ENCODE measurements at regions of chr6 and their contacts with region 1.

Region 1: GRCh38 chr6:31597006-31597405 is 4.2 kb upstream of the NCR3 start:
- DNase-seq: peak; percentile 61
- ATAC-seq: peak; percentile 78
- H3K4me3 Mint-ChIP-seq: no peak overlapping the region
- H3K27ac Mint-ChIP-seq: no peak overlapping the region
- H3K4me1 Mint-ChIP-seq: peaks cover 46% of the 10 kb centered on the region
- H3K27me3 Mint-ChIP-seq: no peaks in the 10 kb centered on the region

Region 2: GRCh38 chr6:30981942-30982772 is 614.8 kb before region 1 on chr6:
- CTCF ChIA-PET with region 1: no interaction called
- POLR2A ChIA-PET with region 1: no interaction called
- intact Hi-C with region 1: no loop called
- DNase-seq: no peak
- ATAC-seq: no peak
- H3K4me3 Mint-ChIP-seq: no peak overlapping the region
- H3K27ac Mint-ChIP-seq: no peak overlapping the region
- H3K4me1 Mint-ChIP-seq: peaks cover 6% of the 10 kb centered on the region
- H3K27me3 Mint-ChIP-seq: peaks cover 29% of the 10 kb centered on the region

Region 3: GRCh38 chr6:31493875-31494694 is 102.9 kb before region 1 on chr6:
- CTCF ChIA-PET with region 1: interaction called, 29 read pairs
- POLR2A ChIA-PET with region 1: no interaction called
- intact Hi-C with region 1: loop called (anchors 1 kb)
- DNase-seq: peak; percentile 91
- ATAC-seq: peak; percentile 58
- H3K4me3 Mint-ChIP-seq: peak overlapping the region; percentile 79
- H3K27ac Mint-ChIP-seq: peak overlapping the region; percentile 90
- H3K4me1 Mint-ChIP-seq: peaks cover 43% of the 10 kb centered on the region
- H3K27me3 Mint-ChIP-seq: no peaks in the 10 kb centered on the region

Region 4: DNA sequence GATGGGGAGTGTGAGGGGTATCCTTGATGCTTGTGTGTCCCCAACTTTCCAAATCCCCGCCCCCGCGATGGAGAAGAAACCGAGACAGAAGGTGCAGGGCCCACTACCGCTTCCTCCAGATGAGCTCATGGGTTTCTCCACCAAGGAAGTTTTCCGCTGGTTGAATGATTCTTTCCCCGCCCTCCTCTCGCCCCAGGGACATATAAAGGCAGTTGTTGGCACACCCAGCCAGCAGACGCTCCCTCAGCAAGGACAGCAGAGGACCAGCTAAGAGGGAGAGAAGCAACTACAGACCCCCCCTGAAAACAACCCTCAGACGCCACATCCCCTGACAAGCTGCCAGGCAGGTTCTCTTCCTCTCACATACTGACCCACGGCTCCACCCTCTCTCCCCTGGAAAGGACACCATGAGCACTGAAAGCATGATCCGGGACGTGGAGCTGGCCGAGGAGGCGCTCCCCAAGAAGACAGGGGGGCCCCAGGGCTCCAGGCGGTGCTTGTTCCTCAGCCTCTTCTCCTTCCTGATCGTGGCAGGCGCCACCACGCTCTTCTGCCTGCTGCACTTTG is 21.6 kb before region 1 on chr6 and contains the start of gene TNF:
- CTCF ChIA-PET with region 1: interaction called, 873 read pairs
- POLR2A ChIA-PET with region 1: interaction called, 10 read pairs
- intact Hi-C with region 1: no loop called
- DNase-seq: peak; percentile 89
- ATAC-seq: peak; percentile 23
- H3K4me3 Mint-ChIP-seq: peak within 1 kb of the TSS; percentile 97
- H3K27ac Mint-ChIP-seq: peak within 1 kb of the TSS; percentile 98
- H3K4me1 Mint-ChIP-seq: peaks cover 73% of the 10 kb centered on the region
- H3K27me3 Mint-ChIP-seq: no peaks in the 10 kb centered on the region
- total RNA-seq, gene TNF: 82.3 to 93.3 TPM

Region 5: GRCh38 chr6:31609519-31610406 is 12.8 kb after region 1 on chr6:
- CTCF ChIA-PET with region 1: interaction called, 41 read pairs
- POLR2A ChIA-PET with region 1: no interaction called
- intact Hi-C with region 1: no loop called
- DNase-seq: no peak
- ATAC-seq: no peak
- H3K4me3 Mint-ChIP-seq: no peak overlapping the region
- H3K27ac Mint-ChIP-seq: no peak overlapping the region
- H3K4me1 Mint-ChIP-seq: peaks cover 2% of the 10 kb centered on the region
- H3K27me3 Mint-ChIP-seq: no peaks in the 10 kb centered on the region

Region 6: DNA sequence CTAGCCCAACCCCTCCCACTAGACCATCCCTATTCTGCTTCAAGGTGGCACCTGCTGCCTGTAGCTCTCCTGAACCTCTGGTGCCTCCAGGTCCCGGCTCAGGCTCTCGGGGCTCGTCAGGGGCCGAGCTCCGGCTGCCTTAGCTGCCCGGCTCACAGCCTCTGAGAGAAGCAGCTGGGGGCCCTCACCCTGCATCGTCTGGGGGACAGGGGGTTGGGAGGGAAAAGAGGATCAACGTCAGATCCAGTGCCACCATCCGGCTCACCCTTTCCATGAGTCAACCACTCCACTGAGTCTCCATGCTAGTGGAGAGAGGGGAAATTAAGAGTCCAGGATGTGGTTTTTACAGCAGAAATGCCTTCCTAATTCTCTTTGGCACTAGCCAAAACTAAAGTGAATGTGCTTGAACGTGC is 42.4 kb after region 1 on chr6:
- CTCF ChIA-PET with region 1: no interaction called
- POLR2A ChIA-PET with region 1: no interaction called
- intact Hi-C with region 1: no loop called
- DNase-seq: peak; percentile 61
- ATAC-seq: peak; percentile 46
- H3K4me3 Mint-ChIP-seq: no peak overlapping the region
- H3K27ac Mint-ChIP-seq: peak overlapping the region; percentile 86
- H3K4me1 Mint-ChIP-seq: peaks cover 7% of the 10 kb centered on the region
- H3K27me3 Mint-ChIP-seq: no peaks in the 10 kb centered on the region

Region 7: DNA sequence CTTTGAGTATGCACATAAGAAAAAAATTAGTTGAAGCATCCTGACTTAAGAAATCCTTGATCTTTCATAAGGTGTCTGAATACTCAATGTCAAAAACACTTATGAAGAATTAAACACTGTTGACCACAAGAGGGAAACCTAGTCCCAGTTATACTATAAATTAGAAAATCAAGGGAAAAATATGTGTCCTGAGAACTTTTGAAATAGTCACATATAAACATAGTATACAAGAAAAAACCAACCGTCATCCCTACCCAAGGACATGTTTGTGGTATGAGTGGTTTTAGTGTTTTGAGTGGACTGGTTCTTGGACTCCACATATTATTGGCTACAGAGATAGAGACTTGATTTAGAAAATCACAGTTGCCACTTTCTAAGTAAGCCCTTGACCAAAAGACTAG is 835.0 kb after region 1 on chr6:
- CTCF ChIA-PET with region 1: no interaction called
- POLR2A ChIA-PET with region 1: no interaction called
- intact Hi-C with region 1: no loop called
- DNase-seq: no peak
- ATAC-seq: no peak
- H3K4me3 Mint-ChIP-seq: no peak overlapping the region
- H3K27ac Mint-ChIP-seq: no peak overlapping the region
- H3K4me1 Mint-ChIP-seq: no peaks in the 10 kb centered on the region
- H3K27me3 Mint-ChIP-seq: peaks cover 12% of the 10 kb centered on the region